Head of caudate nucleus (tissue), 42 donors: ENCODE measurements at regions of chr3 and their contacts with region 1.

Region 1: DNA sequence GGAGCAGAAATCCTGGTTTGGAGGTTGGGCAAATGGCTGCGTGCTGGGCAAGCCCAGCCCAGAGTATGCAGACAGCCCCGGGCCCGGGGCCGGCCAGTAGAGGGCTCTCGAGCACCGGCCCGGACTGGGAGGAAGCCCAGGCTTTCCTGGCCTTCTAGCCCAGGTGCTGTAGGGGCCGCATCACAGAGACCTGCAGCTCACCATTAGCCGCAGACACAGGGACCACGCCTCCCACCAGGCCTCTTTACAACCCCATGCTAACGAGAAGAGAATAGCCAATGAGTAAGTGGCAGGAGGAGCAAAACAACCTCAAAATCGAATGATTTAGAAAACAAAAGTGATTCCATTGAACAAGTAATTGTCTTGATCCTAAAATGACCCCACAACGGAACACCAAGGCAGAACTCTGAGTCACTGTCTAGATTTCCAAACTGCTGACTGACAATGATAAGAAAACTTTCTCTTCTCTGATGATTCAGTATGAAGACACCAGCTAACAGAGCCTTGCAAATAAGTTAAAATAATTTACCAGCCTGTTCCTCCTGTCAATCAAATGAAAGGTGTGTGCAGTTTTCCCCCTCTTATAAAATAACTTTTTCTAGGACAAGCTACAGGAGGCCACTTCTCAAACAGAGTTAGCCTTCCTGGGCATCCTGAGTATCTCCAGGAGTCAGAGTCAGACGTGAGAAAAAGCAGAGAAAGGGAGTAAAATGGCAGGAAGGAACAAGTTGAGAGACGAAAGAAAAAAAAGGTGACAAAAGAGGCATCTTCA is 102.2 kb downstream of the DGKG start:
- DNase-seq: peak in 38 of 42 donors; percentile 22 to 84 (median 61)

Region 2: DNA sequence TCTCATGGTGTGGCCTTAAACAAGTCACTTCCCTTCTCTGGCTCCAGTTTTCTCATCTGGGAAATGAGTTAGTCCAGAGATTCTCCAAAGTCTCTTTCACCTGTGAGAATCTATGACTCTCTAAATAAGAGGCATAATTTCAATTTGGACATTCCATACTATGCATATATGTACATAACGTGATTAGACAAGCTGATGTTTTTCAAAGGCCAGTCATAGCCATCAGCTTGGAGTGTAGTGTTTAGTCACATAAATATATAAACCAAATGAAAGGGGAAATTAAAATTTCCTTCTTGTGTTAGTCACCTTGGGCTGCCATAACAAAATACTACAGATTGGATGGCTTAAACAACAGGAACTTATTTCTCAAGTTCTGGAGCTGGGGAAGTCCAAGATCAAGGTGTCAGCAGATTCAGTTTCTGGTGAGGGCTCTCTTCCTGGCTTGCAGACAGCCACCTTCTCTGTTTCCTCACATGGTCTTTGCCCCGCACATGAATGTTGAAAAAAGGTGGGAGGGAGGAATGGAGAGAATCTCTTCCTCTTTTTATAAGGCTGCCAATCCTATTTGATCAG is 780.3 kb before region 1 on chr3:
- intact Hi-C with region 1: no loop called
- DNase-seq: no peak

Region 3: GRCh38 chr3:186540221-186540834 is 280.5 kb after region 1 on chr3:
- intact Hi-C with region 1: loop called (anchors 10 kb)
- DNase-seq: peak; percentile 37 to 93 (median 82)